ENCODE measurements at regions of chr19 and their contacts with region 1.

Region 1: GRCh38 chr19:8505680-8506401 is 3.4 kb upstream of the PRAM1 start:
- DNase-seq: peak; percentile 55 to 63 (median 56)
- H3K4me3 ChIP-seq: peak overlapping the region; percentile 28 to 87 (median 52)
- H3K4me3 Mint-ChIP-seq: peak overlapping the region; percentile 88 to 91
- H3K27ac ChIP-seq: peak overlapping the region; percentile 58 to 83
- H3K27ac Mint-ChIP-seq: peak overlapping the region in 6 of 7 donors; percentile 66 to 98 (median 78)
- H3K4me1 ChIP-seq: peaks cover 57 to 67% of the 10 kb centered on the region in 2 donors
- H3K4me1 Mint-ChIP-seq: peaks cover 56% of the 10 kb centered on the region
- H3K27me3 ChIP-seq: no peaks in the 10 kb centered on the region
- H3K27me3 Mint-ChIP-seq: peaks cover 0 to 2% (median 0%) of the 10 kb centered on the region in 3 donors
- CTCF ChIP-seq: peak; percentile 90

Region 2: DNA sequence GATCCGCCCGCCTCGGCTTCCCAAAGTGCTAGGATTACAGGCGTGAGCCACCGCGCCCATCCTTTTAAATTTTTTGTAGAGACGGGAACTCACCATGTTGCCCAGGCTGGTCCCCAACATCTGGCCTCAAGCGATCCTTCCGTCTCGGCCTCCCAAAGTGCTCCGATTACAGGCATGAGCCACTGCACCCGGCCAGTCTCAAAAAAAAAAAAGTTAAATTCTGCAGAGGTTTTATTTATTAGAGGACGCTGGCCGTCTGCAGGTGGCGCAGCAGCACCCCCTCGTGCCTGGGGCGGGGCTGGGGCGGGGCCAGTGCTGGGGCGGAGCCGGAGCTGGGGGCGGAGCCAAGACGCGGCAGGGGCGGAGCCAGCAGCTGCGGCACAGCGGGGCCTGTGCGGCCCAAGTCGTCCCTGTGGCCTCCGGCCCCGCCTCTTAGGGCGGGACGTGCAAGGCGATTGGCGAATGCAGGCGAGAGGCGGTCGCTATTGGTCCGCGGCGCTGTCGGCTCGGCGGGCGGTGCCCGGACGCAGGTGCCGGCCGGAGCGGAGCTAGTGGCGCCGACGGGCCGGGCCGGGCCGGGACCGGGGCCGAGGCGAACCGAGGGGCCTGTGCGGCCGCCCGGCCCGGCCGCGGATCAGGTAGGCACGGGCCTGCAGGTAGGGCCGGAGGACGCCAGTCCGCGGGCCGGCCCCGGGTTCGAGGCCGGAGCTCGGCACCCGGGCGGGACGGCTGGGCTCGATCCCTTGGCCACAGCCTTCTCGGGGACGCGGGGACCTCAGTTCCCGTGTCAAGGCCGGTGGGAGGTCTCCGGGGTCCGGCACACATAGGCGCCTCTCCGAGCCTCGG is 92.8 kb before region 1 on chr19 and contains the start of gene MARCHF2:
- intact Hi-C with region 1: loop called (anchors 5 to 10 kb)
- DNase-seq: peak; percentile 96 to 97 (median 97)
- H3K4me3 ChIP-seq: peak within 1 kb of the TSS; percentile 75 to 93 (median 91)
- H3K4me3 Mint-ChIP-seq: peak within 1 kb of the TSS; percentile 73 to 84
- H3K27ac ChIP-seq: peak within 1 kb of the TSS in 1 of 2 donors; percentile 73
- H3K27ac Mint-ChIP-seq: peak within 1 kb of the TSS in 3 of 7 donors; percentile 3 to 86 (median 40)
- H3K4me1 ChIP-seq: peaks cover 10 to 19% of the 10 kb centered on the region in 2 donors
- H3K4me1 Mint-ChIP-seq: peaks cover 19% of the 10 kb centered on the region
- H3K27me3 ChIP-seq: no peaks in the 10 kb centered on the region
- H3K27me3 Mint-ChIP-seq: peaks cover 0 to 2% (median 2%) of the 10 kb centered on the region in 3 donors
- CTCF ChIP-seq: peak; percentile 75
- polyA plus RNA-seq, gene MARCHF2: 47.8 to 117 (median 90.8) TPM

Region 3: DNA sequence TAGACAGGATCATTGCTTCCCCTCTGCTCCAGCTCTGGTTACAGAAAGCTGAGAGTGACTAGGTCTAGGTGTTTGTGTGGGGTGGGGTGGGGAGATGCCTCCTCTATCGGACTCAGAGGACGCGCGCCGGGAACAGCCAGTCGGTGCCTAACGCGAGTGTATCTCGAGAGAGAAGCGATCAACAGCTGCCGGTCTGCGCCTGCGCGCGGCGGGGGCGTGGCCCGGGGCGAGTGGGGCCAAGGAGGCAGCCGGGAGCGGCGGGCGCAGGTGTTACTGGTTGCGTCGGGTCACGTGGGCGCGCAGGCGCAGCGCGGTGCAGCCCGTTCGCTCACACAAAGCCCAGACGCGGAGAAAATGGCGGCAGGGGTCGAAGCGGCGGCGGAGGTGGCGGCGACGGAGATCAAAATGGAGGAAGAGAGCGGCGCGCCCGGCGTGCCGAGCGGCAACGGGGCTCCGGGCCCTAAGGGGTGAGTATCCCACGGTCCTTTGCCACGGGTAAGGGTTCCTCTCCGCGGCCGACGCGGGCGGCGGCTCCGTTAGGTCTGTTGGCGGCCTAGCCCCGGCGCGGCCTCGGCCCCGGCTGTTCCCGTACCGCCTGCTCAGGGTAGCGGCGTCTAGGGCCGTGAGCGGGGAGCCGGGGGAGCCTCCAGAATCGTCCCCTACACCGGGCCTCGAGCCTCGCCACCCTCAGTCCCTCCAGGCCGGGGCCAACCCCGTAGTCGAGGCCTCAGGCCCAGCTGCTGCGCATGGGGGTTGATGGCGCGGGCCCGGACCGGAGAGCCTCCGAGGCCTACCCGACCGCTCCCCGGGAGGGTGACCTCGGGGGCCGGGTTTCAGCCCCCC is 61.0 kb before region 1 on chr19 and contains the start of gene HNRNPM:
- intact Hi-C with region 1: loop called in 1 of 2 experiments (anchors 10 kb)
- DNase-seq: peak; percentile 98 to 99 (median 98)
- H3K4me3 ChIP-seq: peak within 1 kb of the TSS; percentile 90 to 94 (median 94)
- H3K4me3 Mint-ChIP-seq: peak within 1 kb of the TSS; percentile 93 to 98
- H3K27ac ChIP-seq: peak within 1 kb of the TSS; percentile 64 to 94
- H3K27ac Mint-ChIP-seq: peak within 1 kb of the TSS; percentile 87 to 97 (median 95)
- H3K4me1 ChIP-seq: peaks cover 25 to 26% of the 10 kb centered on the region in 2 donors
- H3K4me1 Mint-ChIP-seq: peaks cover 38% of the 10 kb centered on the region
- H3K27me3 ChIP-seq: no peaks in the 10 kb centered on the region
- H3K27me3 Mint-ChIP-seq: peaks cover 0 to 7% (median 3%) of the 10 kb centered on the region in 3 donors
- CTCF ChIP-seq: no peak
- polyA plus RNA-seq, gene HNRNPM: 77.0 to 121 (median 116) TPM

Region 4: DNA sequence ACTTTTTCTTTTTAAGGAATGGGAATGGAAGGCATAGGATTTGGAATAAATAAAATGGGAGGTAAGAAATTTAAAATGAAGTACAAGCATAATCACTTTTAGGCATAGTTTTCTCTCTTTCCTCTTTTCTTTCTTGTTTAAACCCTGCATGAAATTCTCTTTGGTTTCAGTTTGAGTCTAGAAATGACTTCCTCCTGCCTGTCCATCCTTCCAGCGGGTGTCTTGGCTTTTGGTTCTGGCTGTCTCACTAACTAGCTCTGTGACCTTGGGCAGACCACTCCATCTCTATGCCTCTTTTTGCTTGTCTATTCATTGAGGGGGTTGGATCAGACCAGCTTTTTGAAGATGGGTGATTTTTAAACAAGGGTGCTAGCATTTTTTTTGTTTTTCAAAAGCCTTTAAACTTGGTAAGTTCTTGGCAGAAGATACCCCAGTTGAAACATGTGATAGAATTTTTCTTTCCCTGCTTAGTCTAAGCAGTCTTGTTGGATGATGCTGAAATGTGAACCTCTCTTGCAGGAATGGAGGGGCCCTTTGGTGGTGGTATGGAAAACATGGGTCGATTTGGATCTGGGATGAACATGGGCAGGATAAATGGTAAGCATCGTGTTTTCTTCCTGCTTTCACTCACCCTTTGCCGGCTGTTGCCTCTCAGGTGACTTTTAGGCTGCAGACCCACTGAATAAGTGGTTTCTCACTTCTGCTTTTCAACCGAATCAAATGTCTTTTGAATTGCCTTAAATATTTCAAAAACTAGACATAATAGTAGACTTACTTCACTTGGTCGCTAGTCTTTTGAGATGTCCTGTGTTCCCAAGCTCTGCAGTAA is 32.0 kb before region 1 on chr19:
- intact Hi-C with region 1: loop called (anchors 5 kb)
- DNase-seq: peak; percentile 22 to 41 (median 27)
- H3K4me3 ChIP-seq: no peak overlapping the region
- H3K4me3 Mint-ChIP-seq: peak overlapping the region; percentile 17 to 57
- H3K27ac ChIP-seq: peak overlapping the region in 1 of 2 donors; percentile 68
- H3K27ac Mint-ChIP-seq: peak overlapping the region; percentile 85 to 92 (median 89)
- H3K4me1 ChIP-seq: peaks cover 24 to 31% of the 10 kb centered on the region in 2 donors
- H3K4me1 Mint-ChIP-seq: peaks cover 32% of the 10 kb centered on the region
- H3K27me3 ChIP-seq: no peaks in the 10 kb centered on the region
- H3K27me3 Mint-ChIP-seq: peaks cover 0 to 2% (median 0%) of the 10 kb centered on the region in 3 donors
- CTCF ChIP-seq: no peak

Region 5: GRCh38 chr19:8487137-8487851 is 18.5 kb before region 1 on chr19:
- intact Hi-C with region 1: loop called in 1 of 2 experiments (anchors 1 kb)
- DNase-seq: peak; percentile 90 to 98 (median 97)
- H3K4me3 ChIP-seq: peak overlapping the region in 1 of 3 experiments; percentile 37
- H3K4me3 Mint-ChIP-seq: peak overlapping the region; percentile 24 to 76
- H3K27ac ChIP-seq: peak overlapping the region; percentile 92 to 93
- H3K27ac Mint-ChIP-seq: peak overlapping the region; percentile 97 to 99 (median 98)
- H3K4me1 ChIP-seq: peaks cover 84 to 88% of the 10 kb centered on the region in 2 donors
- H3K4me1 Mint-ChIP-seq: peaks cover 79% of the 10 kb centered on the region
- H3K27me3 ChIP-seq: no peaks in the 10 kb centered on the region
- H3K27me3 Mint-ChIP-seq: peaks cover 0 to 6% (median 2%) of the 10 kb centered on the region in 3 donors
- CTCF ChIP-seq: no peak

Region 6: DNA sequence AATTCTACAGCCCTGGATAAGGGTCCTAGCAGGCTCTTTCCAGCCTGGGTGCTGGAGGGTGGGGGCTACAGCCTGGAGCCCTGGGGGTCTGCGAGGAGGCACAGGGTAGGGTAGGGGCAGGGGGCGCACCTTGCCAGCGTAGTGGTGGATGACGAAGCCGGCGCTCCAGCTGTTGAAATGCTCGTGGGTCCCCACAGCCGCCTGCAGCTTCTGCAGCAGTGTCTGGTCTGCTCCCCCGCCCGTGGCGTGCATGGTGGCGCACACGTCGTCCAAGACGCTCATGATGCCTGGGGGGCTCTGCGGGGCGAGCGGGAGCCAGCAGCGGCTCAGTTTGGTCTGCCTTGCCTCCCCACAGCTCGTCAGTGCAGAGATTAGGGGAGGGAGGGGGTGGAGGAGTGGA is 38.3 kb after region 1 on chr19:
- intact Hi-C with region 1: no loop called
- DNase-seq: no peak
- H3K4me3 ChIP-seq: no peak overlapping the region
- H3K4me3 Mint-ChIP-seq: no peak overlapping the region
- H3K27ac ChIP-seq: no peak overlapping the region
- H3K27ac Mint-ChIP-seq: no peak overlapping the region
- H3K4me1 ChIP-seq: peaks cover 16 to 24% of the 10 kb centered on the region in 2 donors
- H3K4me1 Mint-ChIP-seq: peaks cover 17% of the 10 kb centered on the region
- H3K27me3 ChIP-seq: no peaks in the 10 kb centered on the region
- H3K27me3 Mint-ChIP-seq: no peaks in the 10 kb centered on the region
- CTCF ChIP-seq: no peak

Measured in CD14-positive monocyte (primary cell).